ENCODE measurements at regions of chr6 and their contacts with region 1.

Region 1: DNA sequence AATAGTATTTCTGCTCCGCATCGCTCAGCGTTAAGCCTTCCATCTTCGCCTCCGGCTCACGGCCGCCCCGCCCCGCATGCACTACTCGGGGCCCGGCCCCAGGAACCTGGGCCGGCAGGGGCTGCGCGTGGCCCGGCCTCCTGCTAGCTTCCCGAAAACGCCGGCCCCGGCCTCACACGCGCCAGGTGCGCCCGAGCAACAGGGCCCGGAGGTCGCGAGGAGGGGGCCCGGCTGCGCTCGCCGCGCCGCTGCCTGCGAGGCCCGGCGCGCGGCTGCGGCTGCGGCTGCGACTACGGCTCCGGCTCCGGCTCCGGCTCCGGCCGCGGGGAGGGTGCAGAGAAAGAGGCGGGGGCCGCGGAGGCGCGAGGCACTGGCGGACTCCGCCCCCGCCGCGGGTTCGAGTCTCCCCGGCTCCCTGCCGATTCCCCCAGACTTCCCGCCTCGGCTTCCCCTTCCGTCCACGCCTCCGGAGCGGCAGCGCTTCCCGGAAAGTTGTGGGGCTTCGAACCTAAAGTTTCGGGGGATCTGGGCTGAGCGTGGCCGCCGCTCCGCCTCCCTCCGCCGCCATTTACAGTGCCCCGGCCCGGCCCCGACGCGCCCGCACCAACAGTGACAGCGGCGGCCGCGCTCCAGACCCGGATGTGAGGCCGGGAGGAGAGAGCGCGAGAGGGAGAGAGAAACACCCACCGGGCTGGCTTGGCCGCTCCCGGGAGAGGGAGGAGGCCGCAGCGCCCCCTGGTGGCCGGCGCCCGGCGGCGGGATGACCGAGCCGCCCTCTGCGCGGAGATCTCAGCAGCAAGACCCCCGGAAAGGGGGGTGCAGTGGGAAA is at the start of gene REPS1:
- DNase-seq: peak; percentile 90
- H3K4me3 Mint-ChIP-seq: peak within 1 kb of the TSS; percentile 88
- H3K27ac Mint-ChIP-seq: peak within 1 kb of the TSS; percentile 88
- H3K4me1 Mint-ChIP-seq: peaks cover 7% of the 10 kb centered on the region
- H3K27me3 Mint-ChIP-seq: no peaks in the 10 kb centered on the region
- total RNA-seq, gene REPS1: 41.9 to 45.6 TPM

Region 2: DNA sequence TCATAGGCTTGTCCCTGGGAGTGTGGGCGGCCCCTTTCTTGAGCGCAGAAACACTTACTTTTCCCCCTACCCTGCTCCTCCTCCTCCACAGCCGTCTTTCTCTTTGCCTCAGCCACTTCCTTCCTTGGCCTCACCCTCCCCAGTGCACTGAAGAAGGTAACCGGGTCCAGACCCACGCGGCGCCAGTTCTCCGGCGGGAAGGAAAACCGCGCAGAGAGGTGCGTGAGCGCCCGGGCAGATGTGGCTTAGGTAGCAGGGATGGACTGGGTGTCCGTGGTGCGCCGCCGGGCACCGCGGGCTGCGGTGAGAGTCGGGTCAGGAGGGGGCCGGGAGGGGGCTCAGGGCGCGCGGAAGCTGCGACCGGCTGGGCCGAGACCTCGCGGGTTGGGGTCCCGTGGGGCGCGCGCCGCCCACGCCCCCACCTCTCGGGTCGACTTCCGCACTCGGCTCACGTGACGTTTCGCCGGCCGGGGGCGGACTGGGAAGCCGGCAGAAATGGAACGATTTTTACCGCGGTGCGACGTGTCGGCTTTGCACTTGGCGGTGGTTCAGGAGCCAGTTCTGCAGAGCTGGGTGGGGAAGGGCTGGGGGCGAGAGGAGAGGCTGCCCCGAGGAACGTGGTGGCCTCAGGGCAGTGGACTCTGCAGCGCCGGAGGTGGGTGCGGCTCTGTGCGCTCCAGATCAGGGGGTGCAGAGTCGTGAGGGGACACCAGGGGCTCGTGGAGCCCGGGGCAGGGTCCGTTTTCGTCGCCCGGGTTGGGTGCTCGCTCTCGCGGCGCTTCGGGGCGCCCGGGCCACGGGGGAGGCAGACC is 41.0 kb after region 1 on chr6 and contains the start of gene ABRACL:
- CTCF ChIA-PET with region 1: interaction called, 8 read pairs
- POLR2A ChIA-PET with region 1: interaction called, 24 read pairs
- DNase-seq: peak; percentile 83
- H3K4me3 Mint-ChIP-seq: peak within 1 kb of the TSS; percentile 91
- H3K27ac Mint-ChIP-seq: peak within 1 kb of the TSS; percentile 75
- H3K4me1 Mint-ChIP-seq: peaks cover 25% of the 10 kb centered on the region
- H3K27me3 Mint-ChIP-seq: no peaks in the 10 kb centered on the region
- total RNA-seq, gene ABRACL: 174 to 176 TPM

Measured in activated CD4-positive, alpha-beta memory T cell treated with anti-CD3 and anti-CD28 coated beads, Interleukin-2, amount 10 ng/mL, durations not matched to agents 7 days and 5 days (primary cell).